OCI-LY7 (cell line): ENCODE measurements at regions of chr4 and their contacts with region 1.

Region 1: GRCh38 chr4:26826721-26827120 is 33.9 kb upstream of the STIM2 start:
- DNase-seq: peak; percentile 96
- H3K4me3 ChIP-seq: peak overlapping the region; percentile 41
- H3K27ac ChIP-seq: peak overlapping the region; percentile 98
- H3K4me1 ChIP-seq: peaks cover 82% of the 10 kb centered on the region
- CTCF ChIP-seq: no peak

Region 2: GRCh38 chr4:25870081-25870480 is 956.6 kb before region 1 on chr4:
- CTCF ChIA-PET with region 1: interaction called, 4 read pairs
- POLR2A ChIA-PET with region 1: interaction called, 44 read pairs
- intact Hi-C with region 1: loop called (anchors 2 kb)
- DNase-seq: peak; percentile 83
- H3K4me3 ChIP-seq: peak overlapping the region; percentile 75
- H3K27ac ChIP-seq: peak overlapping the region; percentile 99
- H3K4me1 ChIP-seq: peaks cover 100% of the 10 kb centered on the region
- CTCF ChIP-seq: no peak

Region 3: DNA sequence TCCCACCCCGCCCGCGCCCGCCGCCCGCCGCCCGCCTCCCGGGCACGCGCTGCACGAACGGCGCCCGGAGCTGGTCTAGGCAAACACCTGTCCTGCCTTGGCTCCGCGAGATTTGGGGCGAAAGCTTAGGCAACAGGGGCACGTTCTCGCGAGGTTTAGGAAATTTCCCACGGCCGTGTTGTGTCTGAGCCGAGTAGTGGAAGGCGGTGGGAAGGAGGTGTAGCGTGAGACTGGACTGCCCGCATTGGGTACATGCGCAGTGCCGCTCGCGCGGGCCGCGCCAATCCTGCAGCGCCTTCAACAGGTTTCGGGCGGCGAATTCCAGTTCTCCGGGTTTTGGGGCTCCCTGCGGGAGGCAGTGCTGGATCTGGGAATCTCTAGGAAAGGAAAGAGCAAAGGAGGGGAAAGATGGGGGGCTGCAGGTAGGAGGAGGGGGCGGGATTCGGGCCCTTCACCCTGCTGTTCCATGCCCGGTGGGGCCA is 507.2 kb before region 1 on chr4:
- CTCF ChIA-PET with region 1: no interaction called
- POLR2A ChIA-PET with region 1: no interaction called
- intact Hi-C with region 1: loop called (anchors 5 kb)
- DNase-seq: peak; percentile 99
- H3K4me3 ChIP-seq: peak overlapping the region; percentile 96
- H3K27ac ChIP-seq: peak overlapping the region; percentile 82
- H3K4me1 ChIP-seq: peaks cover 15% of the 10 kb centered on the region
- CTCF ChIP-seq: 0 out of 2 replicates have a peak, but pooled peaks have one; percentile 28

Region 4: GRCh38 chr4:26632916-26633315 is 193.8 kb before region 1 on chr4:
- CTCF ChIA-PET with region 1: no interaction called
- POLR2A ChIA-PET with region 1: no interaction called
- intact Hi-C with region 1: no loop called
- DNase-seq: no peak
- H3K4me3 ChIP-seq: no peak overlapping the region
- H3K27ac ChIP-seq: no peak overlapping the region
- H3K4me1 ChIP-seq: no peaks in the 10 kb centered on the region
- CTCF ChIP-seq: no peak

Region 5: GRCh38 chr4:26812049-26812714 is 14.5 kb before region 1 on chr4:
- CTCF ChIA-PET with region 1: interaction called, 3 read pairs
- POLR2A ChIA-PET with region 1: interaction called, 40 read pairs
- intact Hi-C with region 1: no loop called
- DNase-seq: no peak
- H3K4me3 ChIP-seq: no peak overlapping the region
- H3K27ac ChIP-seq: no peak overlapping the region
- H3K4me1 ChIP-seq: peaks cover 37% of the 10 kb centered on the region
- CTCF ChIP-seq: no peak

Region 6: GRCh38 chr4:26854701-26855100 is 28.0 kb after region 1 on chr4:
- CTCF ChIA-PET with region 1: interaction called, 11 read pairs
- POLR2A ChIA-PET with region 1: interaction called, 440 read pairs
- intact Hi-C with region 1: no loop called
- DNase-seq: no peak
- H3K4me3 ChIP-seq: no peak overlapping the region
- H3K27ac ChIP-seq: no peak overlapping the region
- H3K4me1 ChIP-seq: peaks cover 28% of the 10 kb centered on the region
- CTCF ChIP-seq: no peak

Region 7: DNA sequence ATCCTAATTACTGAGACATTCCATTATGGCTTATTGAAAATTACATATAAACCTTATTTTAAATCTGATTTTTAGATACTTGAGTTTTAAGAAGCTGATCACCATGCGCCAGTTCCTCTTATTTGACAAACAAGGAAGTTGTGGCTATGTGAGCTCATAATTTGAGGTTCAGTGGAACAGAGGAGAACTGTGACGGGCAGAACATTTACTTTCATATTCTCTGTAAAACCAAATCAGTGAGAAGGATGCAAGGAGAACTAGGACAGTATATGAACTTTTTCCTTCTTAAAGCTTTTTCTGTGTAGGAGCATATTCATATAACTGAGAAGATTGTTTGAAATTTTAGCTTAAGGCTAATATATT is 59.2 kb after region 1 on chr4:
- CTCF ChIA-PET with region 1: interaction called, 3 read pairs
- POLR2A ChIA-PET with region 1: interaction called, 86 read pairs
- intact Hi-C with region 1: loop called (anchors 2 kb)
- DNase-seq: peak; percentile 88
- H3K4me3 ChIP-seq: peak overlapping the region; percentile 61
- H3K27ac ChIP-seq: peak overlapping the region; percentile 95
- H3K4me1 ChIP-seq: peaks cover 62% of the 10 kb centered on the region
- CTCF ChIP-seq: no peak